ENCODE measurements at regions of chr14 and their contacts with region 1.

Region 1: GRCh38 chr14:81170104-81170828 is 50.5 kb downstream of the GTF2A1 start:
- DNase-seq: peak; percentile 98

Region 2: GRCh38 chr14:80996049-80996901 is 174.0 kb before region 1 on chr14:
- intact Hi-C with region 1: loop called in 1 of 2 experiments (anchors 5 kb)
- DNase-seq: no peak

Region 3: DNA sequence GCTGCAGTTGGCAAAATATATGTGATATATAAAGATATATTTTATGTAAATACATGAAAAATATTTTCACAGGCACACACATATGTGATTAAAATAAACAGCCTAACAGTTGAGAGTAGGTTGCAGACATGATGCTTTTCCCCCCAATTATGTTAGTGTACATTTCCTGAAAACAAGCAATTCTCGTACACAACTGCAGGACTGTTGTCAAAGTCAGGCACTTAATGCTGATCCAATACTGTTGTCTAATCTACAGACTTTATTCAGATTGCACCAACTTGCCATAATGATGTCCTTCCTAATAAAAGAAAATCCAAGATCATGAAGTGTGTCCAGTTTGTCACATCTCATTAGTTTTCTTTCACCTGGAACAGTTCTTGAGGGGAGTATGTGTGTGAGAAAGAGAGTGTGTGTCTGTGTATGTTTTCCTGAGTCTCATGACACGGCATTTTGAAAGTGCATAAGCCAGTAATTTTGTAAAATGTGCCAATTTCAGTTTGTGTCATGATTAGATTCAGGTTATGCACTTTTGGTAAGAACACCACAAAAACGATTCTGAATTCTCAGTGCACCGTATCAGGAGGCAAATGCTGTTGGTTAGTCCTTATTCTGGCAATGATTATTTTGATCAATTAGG is 379.9 kb after region 1 on chr14:
- intact Hi-C with region 1: no loop called
- DNase-seq: no peak

Measured in posterior vena cava (tissue), 2 donors.